PC-3 (cell line): ENCODE measurements at regions of chr15 and their contacts with region 1.

Region 1: GRCh38 chr15:67085818-67086636 is 20.6 kb downstream of the SMAD3 start:
- DNase-seq: no peak
- ATAC-seq: no peak
- H3K4me3 ChIP-seq: no peak overlapping the region
- H3K27ac ChIP-seq: no peak overlapping the region
- H3K4me1 ChIP-seq: peaks cover 72% of the 10 kb centered on the region
- H3K27me3 ChIP-seq: no peaks in the 10 kb centered on the region
- CTCF ChIP-seq: no peak

Region 2: GRCh38 chr15:67070892-67071664 is 14.9 kb before region 1 on chr15:
- CTCF ChIA-PET with region 1: no interaction called
- POLR2A ChIA-PET with region 1: no interaction called
- intact Hi-C with region 1: no loop called
- DNase-seq: no peak
- ATAC-seq: no peak
- H3K4me3 ChIP-seq: no peak overlapping the region
- H3K27ac ChIP-seq: peak overlapping the region; percentile 27
- H3K4me1 ChIP-seq: peaks cover 73% of the 10 kb centered on the region
- H3K27me3 ChIP-seq: no peaks in the 10 kb centered on the region
- CTCF ChIP-seq: no peak

Region 3: DNA sequence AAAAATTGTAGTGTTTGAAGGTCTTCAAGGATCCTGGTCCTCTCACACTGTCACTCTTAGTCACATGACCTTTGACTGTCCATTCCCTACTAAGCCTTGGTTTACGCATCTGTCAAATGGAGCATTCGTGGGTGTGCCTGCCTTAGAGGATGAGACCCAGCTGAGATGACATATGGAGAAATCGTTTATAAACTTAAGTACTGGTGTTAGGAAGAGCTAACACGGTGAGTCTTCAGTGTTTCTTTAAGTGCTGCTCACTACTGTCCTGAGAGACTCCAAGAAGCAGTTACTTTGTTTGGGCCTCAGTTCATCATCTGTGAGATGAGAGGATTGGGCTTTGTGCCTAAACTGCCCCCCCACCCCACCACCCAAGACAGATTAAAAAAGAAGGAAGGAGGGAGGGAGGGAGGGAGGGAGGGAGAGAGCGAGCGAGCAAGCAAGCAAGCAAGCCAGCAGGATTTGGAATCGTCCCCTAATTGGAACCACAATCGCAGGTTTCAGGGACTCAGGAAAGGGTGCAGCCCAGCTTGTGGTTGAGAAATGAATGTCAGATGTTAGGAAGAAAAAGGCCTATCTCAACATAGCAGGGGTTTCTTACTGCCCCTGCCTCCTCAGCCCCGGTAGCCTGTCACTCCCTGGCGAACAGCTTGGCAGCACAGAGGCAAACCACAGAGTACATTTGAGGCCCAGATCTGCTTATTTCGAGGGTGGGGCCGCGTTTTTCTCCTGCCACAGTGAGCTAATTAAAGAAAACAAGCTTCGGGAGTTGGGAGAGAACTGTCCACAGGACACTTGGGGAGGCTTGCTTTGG is 12.1 kb after region 1 on chr15:
- CTCF ChIA-PET with region 1: no interaction called
- POLR2A ChIA-PET with region 1: interaction called, 11 read pairs
- intact Hi-C with region 1: no loop called
- DNase-seq: no peak
- ATAC-seq: no peak
- H3K4me3 ChIP-seq: no peak overlapping the region
- H3K27ac ChIP-seq: no peak overlapping the region
- H3K4me1 ChIP-seq: peaks cover 47% of the 10 kb centered on the region
- H3K27me3 ChIP-seq: no peaks in the 10 kb centered on the region
- CTCF ChIP-seq: no peak